ENCODE measurements at regions of chr18 and their contacts with region 1.

Region 1: DNA sequence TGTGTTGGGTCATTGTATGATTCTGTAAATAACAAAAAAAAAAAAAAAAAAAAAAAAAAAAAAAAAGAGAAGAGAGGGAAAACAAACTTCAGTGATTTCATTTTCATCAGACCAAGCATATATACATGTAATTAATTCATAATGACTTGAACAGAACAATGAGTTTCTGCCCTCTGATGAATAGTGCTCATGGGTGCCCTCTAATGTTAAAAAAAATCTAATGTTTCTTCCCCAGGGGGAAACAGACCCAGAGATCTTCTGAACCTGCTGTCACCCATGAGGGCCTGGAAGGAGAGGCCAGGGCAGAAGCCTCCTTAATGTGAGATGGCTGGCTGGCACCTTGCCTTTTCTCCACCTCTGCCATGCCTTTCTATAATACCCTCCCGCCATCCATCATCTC is 289.2 kb downstream of the ZNF521 start:
- DNase-seq: no peak
- H3K4me3 ChIP-seq: no peak overlapping the region
- H3K27ac ChIP-seq: no peak overlapping the region
- H3K4me1 ChIP-seq: no peaks in the 10 kb centered on the region
- H3K27me3 ChIP-seq: no peaks in the 10 kb centered on the region
- CTCF ChIP-seq: no peak
- POLR2A ChIP-seq: no peak

Region 2: DNA sequence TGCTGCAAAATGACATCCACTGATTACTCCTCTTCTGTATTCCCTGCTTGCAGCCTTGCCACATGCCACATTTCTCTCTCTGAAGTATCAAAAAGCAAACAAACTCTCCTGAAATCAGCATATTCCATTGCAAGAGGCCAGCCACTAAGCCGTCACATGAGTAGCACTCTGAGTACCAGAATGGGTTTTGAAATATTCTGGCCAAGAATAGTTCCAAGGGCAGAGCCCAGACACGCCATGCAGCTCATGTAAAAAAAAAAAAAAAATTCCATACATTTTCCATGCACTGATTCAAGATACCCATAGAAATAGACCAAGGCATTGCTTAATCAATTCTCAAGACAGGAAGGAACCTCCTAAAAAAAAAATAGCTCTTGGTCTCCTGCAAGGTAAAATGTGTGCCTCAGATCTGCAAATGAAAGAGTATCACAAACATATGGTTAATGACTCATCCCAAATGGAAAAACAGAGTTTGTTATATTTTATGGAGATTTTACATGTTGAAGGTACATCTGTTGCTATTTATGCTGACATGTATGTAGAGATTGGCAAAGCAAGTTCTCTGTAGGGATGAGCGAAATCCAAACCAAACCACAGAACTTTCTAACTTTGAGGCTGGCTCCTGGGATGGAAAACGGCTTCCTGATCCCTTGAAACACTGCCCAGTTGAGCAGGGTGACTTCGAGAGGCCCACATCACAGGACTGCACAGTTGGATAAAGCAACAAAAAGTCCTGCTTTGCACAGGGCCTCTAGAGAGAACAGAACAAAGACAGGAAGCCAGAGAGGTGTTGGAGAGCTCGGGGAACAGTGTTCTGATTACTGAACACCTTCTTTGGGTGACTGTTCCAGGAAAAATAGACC is 56.9 kb before region 1 on chr18:
- intact Hi-C with region 1: loop called (anchors 10 kb)
- DNase-seq: peak; percentile 39 to 55
- H3K4me3 ChIP-seq: no peak overlapping the region
- H3K27ac ChIP-seq: no peak overlapping the region
- H3K4me1 ChIP-seq: peaks cover 0 to 10% of the 10 kb centered on the region in 2 donors
- H3K27me3 ChIP-seq: no peaks in the 10 kb centered on the region
- CTCF ChIP-seq: no peak
- POLR2A ChIP-seq: no peak

Measured in thyroid gland (tissue), 4 donors.